ENCODE measurements at regions of chr5 and their contacts with region 1.

Region 1: DNA sequence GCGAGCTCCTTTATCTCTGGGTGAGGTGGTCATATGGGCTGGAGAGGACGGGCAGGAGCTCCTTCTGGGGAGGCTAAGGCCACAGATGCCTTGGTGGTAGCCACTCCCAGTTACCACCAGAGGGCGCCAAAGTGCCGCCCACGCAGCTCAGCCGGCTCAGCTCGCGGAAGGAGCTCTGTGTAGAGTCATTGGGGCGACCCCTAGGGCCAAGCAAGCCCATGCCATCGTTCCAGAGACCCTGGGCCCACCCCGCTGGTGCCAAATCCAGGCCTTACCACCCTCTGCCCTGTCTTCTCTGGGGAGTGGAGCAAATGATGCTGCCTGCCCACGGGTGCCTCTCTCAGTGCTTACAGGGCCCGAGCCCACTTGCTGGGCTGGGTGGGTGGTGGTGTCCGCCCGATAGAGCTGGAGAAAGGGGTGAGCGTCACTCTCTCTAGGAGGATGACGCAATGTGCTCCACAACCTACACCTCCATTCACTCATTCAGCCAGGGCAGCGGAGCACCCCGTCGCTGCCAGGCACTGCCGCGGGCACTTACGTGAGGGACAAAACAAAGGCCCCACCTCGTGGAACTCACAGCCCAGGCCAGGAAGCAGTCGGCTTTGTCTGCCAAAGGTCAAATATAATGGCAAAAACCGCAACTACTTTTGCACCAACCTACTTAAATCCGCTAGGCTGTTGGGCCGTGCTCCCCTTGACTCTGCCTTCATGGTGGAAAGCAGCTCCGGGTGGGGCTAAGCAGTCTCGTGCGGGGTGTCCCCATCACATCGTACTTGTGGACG is 13.8 kb downstream of the TSPAN17 start:
- DNase-seq: peak; percentile 81
- H3K4me3 Mint-ChIP-seq: no peak overlapping the region
- H3K27ac Mint-ChIP-seq: no peak overlapping the region
- H3K4me1 Mint-ChIP-seq: no peaks in the 10 kb centered on the region
- H3K27me3 Mint-ChIP-seq: peaks cover 17% of the 10 kb centered on the region
- CTCF ChIP-seq: peak; percentile 99

Region 2: GRCh38 chr5:176621661-176622079 is 39.4 kb before region 1 on chr5:
- CTCF ChIA-PET with region 1: interaction called, 12 read pairs
- POLR2A ChIA-PET with region 1: no interaction called
- intact Hi-C with region 1: no loop called
- DNase-seq: no peak
- H3K4me3 Mint-ChIP-seq: no peak overlapping the region
- H3K27ac Mint-ChIP-seq: no peak overlapping the region
- H3K4me1 Mint-ChIP-seq: peaks cover 10% of the 10 kb centered on the region
- H3K27me3 Mint-ChIP-seq: peaks cover 32% of the 10 kb centered on the region
- CTCF ChIP-seq: no peak

Region 3: GRCh38 chr5:176817841-176818377 is 156.9 kb after region 1 on chr5:
- CTCF ChIA-PET with region 1: interaction called, 6 read pairs
- POLR2A ChIA-PET with region 1: no interaction called
- intact Hi-C with region 1: loop called (anchors 2 kb)
- DNase-seq: no peak
- H3K4me3 Mint-ChIP-seq: peak overlapping the region; percentile 35
- H3K27ac Mint-ChIP-seq: no peak overlapping the region
- H3K4me1 Mint-ChIP-seq: peaks cover 12% of the 10 kb centered on the region
- H3K27me3 Mint-ChIP-seq: peaks cover 10% of the 10 kb centered on the region
- CTCF ChIP-seq: peak; percentile 24

Region 4: DNA sequence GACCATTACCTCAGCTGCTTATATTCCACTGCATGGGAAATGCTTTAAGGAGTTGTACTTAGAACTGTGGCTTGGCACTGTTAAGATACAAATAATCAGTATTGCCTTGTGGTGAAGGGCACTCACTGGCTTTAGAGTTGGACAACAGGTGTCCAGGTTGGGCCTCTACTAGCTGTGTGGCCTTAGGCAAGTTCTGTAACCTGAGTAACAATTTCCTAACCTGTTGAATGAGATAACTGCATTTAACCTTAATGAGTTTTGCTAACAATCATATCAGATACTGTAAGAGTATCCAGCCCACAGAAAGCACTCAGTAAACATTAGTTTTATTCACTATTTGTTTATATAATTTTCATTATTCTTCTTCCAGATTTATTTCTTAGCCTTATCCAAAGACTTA is 255.3 kb after region 1 on chr5:
- CTCF ChIA-PET with region 1: interaction called, 33 read pairs
- POLR2A ChIA-PET with region 1: no interaction called
- intact Hi-C with region 1: no loop called
- DNase-seq: no peak
- H3K4me3 Mint-ChIP-seq: no peak overlapping the region
- H3K27ac Mint-ChIP-seq: no peak overlapping the region
- H3K4me1 Mint-ChIP-seq: peaks cover 4% of the 10 kb centered on the region
- H3K27me3 Mint-ChIP-seq: no peaks in the 10 kb centered on the region
- CTCF ChIP-seq: no peak

Region 5: DNA sequence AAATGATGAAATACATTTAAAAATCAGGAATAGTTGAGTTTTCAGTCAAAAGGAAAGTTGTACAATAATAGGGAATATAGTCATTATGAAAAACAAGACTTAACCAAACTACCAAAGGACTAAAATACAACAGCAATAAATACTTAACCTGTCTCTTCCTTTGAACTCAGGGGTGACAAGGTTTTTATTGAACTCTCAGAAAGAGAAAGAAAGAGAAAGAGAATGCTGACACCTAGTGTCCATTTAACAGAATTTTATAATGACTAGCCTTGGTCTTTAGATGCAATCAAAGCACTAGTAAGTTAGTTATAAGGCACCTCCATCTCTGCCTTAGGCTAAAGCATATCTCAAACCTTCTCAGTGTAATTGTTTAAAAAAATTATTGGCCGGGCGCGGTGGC is 298.0 kb after region 1 on chr5:
- CTCF ChIA-PET with region 1: interaction called, 86 read pairs
- POLR2A ChIA-PET with region 1: no interaction called
- intact Hi-C with region 1: loop called (anchors 2 kb)
- DNase-seq: peak; percentile 45
- H3K4me3 Mint-ChIP-seq: no peak overlapping the region
- H3K27ac Mint-ChIP-seq: no peak overlapping the region
- H3K4me1 Mint-ChIP-seq: peaks cover 23% of the 10 kb centered on the region
- H3K27me3 Mint-ChIP-seq: no peaks in the 10 kb centered on the region
- CTCF ChIP-seq: peak; percentile 45

Region 6: DNA sequence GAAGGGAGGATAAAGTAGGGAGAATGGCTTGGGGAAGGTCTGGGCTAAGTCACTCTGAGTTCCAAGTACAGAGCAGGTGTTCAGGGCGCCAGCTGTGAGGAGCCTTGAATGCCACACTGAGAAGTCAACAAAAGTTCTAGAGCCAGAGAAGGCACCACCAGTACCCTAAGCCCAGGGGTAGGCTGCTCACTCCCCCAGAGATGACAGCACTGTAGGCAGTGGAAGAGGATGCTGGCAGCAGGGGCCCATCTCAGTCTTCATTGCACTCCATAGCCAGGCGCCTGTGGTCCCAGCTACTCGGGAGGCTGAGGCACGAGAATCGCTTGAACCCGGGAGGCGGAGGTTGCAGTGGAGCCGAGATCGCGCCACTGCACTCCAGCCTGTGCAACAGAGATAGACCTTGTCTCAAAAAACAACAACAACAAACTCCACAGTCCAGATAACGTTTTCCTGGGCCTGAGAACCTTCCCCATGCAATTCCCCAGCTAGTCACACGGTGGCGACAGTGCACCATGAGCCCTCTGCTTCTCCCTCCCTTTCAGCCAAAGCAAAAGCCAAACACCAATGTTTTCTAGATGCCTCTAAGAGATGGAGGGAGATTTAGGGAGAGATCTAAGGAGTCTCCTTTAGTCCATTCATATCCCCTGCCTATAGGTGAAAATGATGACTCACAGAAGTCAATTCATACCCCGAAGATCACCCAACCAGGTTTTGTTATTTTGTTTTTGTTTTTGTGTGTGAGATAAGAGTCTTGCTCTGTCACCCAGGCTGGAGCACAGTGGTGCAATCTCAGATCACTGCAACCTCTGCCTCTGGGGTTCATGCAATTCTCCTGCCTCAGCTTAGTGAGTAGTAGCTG is 452.7 kb after region 1 on chr5:
- CTCF ChIA-PET with region 1: interaction called, 116 read pairs
- POLR2A ChIA-PET with region 1: interaction called, 4 read pairs
- intact Hi-C with region 1: loop called (anchors 1 kb)
- DNase-seq: peak; percentile 86
- H3K4me3 Mint-ChIP-seq: no peak overlapping the region
- H3K27ac Mint-ChIP-seq: no peak overlapping the region
- H3K4me1 Mint-ChIP-seq: peaks cover 4% of the 10 kb centered on the region
- H3K27me3 Mint-ChIP-seq: no peaks in the 10 kb centered on the region
- CTCF ChIP-seq: peak; percentile 100

Measured in MCF 10A (cell line).